BJ (cell line): ENCODE measurements at regions of chr1 and their contacts with region 1.

Region 1: DNA sequence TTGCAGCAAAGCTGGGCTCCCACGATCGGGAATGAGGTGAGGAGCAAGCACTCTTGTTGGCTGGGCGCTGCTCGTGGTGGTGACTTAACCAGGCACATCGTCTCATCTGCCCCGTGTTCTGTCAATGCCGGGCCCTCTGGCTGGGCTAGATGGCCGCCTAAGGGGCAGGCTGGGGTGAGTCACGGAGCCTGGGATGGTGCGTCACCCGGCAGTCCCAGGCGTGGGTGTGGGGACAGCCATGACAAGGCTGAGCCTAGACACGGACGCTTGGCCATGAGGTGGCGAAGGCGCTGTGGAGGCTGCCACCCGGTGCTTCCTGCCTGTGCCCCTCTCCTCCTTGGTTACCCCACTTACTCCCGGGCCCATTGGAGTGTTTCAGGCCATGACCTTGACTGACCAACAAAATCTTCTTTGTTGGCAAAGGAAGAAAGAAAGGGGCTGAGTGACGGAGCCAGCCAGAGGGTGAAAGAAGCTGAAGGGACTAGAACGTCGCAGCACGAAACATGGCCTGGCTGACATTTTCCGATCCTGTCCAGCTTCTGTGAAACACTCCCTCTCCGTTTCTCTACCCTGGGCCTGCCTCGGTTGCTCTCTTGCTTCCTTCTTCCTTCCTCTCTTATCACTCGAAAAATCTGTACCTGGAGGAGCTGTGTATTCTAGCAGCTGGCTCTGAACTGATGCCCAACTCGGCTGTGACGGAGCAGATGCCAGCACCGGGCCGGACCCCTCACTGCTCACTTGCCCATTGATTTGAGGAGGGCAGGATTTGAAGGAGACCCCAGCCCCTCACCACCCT is 596 bp downstream of the CD247 start:
- DNase-seq: no peak
- H3K4me3 ChIP-seq: no peak overlapping the region
- H3K27me3 ChIP-seq: peaks cover 3% of the 10 kb centered on the region; the same call in 1 of the 2 replicates
- CTCF ChIP-seq: no peak

Region 2: DNA sequence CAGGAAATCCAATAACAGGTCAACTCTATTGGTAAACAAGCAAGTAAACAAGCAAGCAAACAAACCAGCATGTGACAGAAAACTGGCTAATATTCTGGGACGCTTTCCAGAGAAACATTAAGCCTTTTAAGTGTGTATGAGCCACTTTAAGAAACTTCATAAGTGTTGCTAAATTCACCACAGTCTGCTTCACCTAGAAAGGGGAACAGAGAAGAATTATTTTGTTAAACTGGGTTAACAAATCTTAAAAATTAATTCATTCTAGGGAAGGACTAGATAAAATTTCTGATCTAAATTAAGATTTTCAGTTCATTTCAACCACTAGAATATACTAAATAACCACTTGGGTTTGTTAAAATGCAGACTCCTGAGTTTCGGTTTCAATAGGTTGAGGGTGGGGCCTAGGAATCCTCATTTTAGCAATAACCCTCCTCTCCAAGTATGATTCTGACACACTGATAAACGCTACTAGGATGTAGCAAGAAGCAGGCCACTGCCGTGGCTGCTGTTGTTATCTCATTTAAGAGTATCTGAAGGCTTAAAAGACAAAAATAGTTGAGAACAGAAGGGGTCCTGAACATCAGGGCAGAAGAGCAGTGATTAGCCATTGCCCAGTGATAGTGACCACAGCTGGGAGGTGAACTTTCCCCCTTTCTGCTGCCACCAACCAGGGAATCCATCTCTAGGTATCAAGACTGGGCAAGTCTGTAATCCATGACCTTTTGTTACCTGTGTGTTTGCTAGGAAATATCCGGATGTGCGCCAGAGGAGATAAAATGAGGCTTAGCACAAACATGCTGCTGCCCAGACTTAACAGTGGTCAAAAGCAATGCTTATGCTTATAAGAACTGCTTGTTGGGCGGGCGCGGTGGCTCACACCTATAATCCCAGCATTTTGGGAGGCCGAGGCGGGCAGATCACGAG is 24.6 kb after region 1 on chr1:
- CTCF ChIA-PET with region 1: interaction called, 10 read pairs
- POLR2A ChIA-PET with region 1: no interaction called
- DNase-seq: no peak
- H3K4me3 ChIP-seq: no peak overlapping the region
- H3K27me3 ChIP-seq: no peaks in the 10 kb centered on the region
- CTCF ChIP-seq: no peak